Cardiac septum (tissue), 1 donor: ENCODE measurements at regions of chr12 and their contacts with region 1.

Region 1: DNA sequence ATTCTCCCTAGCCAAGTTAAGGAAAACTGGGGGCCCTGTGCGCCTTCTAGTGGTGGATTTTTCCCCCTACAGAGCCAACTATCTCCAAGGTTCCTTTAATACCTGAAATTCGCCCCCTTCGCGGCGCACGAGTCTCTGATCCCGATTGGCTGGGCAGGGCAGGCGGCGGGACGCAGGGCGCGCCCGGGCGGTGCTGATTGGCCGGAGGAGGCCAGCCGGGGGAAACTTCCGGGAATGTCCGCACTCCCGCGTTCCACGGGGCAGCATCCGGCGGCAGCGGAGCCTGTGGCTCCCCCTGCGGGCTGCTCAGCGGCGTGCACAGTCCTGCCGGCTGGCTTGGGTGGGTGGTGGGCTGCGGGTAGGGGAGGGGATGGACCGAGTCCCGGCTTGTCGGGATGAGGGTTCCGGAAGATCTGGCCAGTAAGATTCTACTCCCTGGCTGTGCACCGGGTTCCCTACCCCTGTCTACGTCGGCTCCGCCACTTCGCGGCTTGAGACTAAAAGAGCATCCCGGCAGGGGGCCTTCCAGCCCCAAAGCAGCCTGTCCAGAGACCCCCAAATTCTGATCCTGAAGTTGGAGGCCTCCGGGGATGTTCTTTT is at the start of gene NABP2:
- DNase-seq: peak; percentile 99
- total RNA-seq, gene NABP2: 19.6 TPM

Region 2: DNA sequence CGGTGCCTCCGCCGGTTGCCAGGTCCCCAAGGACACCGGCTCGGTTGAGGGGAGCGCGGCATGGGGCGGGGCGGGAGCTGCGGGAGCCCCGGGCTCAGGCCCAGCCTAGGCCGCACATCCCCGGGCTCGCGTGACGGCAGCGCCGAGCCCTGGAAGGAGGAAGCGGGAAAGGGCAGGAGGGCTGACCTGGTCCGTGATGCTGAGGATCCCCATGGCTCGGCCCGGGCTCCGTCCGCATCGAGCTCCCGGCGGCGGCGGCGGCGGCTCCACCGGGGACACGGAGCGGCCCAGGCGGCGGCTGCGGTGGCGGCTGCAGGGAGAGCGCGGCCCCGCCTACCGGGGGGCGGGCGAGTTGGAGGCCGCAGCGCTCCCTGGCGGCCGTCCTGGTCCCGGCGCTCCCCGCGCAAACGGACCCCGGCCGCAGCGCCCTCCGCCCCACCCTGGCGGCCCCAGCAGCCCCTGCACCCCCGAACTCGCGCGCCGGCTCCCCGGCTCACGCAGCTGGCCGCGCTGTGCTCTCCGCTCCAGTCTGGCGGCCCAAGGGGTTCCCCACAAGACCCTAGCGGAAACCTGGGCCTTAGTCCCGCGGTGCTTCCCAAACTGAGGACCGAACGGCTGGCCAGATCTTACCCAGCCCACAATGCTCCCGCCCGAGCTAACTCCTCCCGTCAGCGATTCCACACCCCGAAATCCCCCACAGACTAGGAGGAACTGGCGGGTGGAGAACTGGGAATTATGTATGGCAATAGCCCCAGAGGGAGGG is 34.0 kb after region 1 on chr12 and contains the start of gene ANKRD52:
- intact Hi-C with region 1: loop called (anchors 5 kb)
- DNase-seq: peak; percentile 90
- total RNA-seq, gene ANKRD52: 28.8 TPM